PC-9 (cell line): ENCODE measurements at regions of chr2 and their contacts with region 1.

Region 1: DNA sequence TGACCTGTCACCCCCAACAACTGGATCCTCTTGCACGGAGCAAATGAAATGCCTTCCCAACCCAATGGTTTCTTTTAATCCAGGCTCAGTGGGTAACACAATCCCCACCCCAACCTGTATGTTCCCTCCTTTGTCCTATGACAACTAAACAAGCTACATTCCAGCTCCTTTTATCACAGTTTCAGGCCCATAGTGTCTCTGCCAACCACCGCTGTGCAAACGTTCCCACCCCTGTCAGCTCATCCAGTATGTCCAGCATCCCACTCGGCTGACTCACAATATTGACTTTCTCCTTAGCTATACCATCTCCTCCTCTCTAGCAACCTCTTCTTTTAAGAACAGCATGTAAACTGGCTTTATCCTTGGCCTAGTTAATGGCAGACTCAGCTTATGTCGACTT is 117.9 kb upstream of the PPP1CB start:
- DNase-seq: peak; percentile 83 to 98
- H3K4me3 ChIP-seq: no peak overlapping the region
- H3K27ac ChIP-seq: peak overlapping the region; percentile 85
- H3K4me1 ChIP-seq: peaks cover 28% of the 10 kb centered on the region
- H3K27me3 ChIP-seq: no peaks in the 10 kb centered on the region
- CTCF ChIP-seq: no peak

Region 2: DNA sequence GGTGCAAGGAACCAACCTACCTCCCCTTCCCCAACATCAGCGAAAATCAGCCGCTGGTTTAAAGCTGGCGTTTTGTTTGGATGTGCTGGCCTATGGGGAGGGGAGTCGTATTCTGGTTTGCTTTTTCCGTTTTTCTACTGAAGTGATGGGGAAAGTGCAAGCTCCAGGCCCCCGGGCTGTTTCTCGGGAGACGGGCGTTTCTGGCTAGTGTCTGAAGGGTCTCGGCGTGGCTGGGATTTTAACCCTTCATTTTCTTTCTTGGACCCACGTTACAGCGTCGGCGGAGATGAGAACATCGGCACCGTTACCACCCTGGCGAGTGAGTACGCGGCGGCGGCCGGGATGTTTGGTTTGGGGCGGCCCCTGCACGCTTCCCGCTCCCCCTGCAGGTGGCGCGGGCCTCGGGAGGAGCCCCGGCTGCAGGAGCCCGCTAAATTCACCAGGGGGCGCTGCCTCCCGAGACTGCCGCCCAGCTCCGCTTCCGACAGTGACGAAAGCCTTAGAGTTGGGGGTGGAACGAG is 67.2 kb before region 1 on chr2:
- CTCF ChIA-PET with region 1: no interaction called
- POLR2A ChIA-PET with region 1: interaction called, 23 read pairs
- intact Hi-C with region 1: no loop called
- DNase-seq: peak; percentile 64 to 89
- H3K4me3 ChIP-seq: peak overlapping the region; percentile 79
- H3K27ac ChIP-seq: no peak overlapping the region
- H3K4me1 ChIP-seq: peaks cover 6% of the 10 kb centered on the region
- H3K27me3 ChIP-seq: no peaks in the 10 kb centered on the region
- CTCF ChIP-seq: peak; percentile 100

Region 3: GRCh38 chr2:28643911-28644334 is 10.2 kb after region 1 on chr2:
- CTCF ChIA-PET with region 1: no interaction called
- POLR2A ChIA-PET with region 1: interaction called, 10 read pairs
- intact Hi-C with region 1: loop called (anchors 1 kb)
- DNase-seq: peak; percentile 48 to 92
- H3K4me3 ChIP-seq: peak overlapping the region; percentile 24; the same call in 1 of the 2 replicates
- H3K27ac ChIP-seq: peak overlapping the region; percentile 90
- H3K4me1 ChIP-seq: peaks cover 71% of the 10 kb centered on the region
- H3K27me3 ChIP-seq: no peaks in the 10 kb centered on the region
- CTCF ChIP-seq: no peak

Region 4: DNA sequence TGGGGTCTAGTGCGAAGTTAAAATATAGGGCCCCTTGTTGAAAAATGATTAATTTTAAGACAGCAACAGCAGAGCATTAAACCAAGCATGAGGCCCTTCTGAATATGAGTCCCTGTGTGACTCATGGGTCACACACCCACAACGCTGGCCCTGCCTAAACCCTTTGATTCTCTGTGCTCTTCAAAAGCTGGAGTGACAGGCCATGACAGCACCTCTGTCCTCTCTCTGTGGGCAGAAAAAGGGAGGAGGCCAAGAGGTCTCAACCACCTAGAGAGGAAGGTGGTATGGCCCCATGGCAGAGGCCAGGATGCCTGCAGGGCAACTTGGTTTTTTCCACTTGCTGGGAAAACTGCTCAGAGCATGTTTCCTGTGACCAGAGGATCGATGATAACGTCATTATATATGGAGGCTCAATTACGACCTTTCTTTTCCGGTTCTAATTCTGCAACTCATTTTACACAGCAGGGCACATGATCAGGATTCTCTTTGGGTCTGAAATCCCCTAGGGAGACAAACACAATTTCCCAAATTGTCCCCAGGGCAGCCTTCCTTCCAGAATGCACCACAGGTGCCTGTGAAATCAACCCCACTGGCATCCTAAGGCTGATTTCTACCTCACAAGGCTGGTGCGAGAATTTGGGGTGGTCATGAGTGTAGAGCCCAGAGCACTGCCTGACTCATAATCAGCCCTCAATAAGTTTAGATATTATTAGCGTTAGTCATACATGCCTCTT is 15.9 kb after region 1 on chr2:
- CTCF ChIA-PET with region 1: no interaction called
- POLR2A ChIA-PET with region 1: no interaction called
- intact Hi-C with region 1: loop called (anchors 1 kb)
- DNase-seq: peak; percentile 74 to 93
- H3K4me3 ChIP-seq: peak overlapping the region; percentile 7; the same call in 1 of the 2 replicates
- H3K27ac ChIP-seq: peak overlapping the region; percentile 87
- H3K4me1 ChIP-seq: peaks cover 61% of the 10 kb centered on the region
- H3K27me3 ChIP-seq: no peaks in the 10 kb centered on the region
- CTCF ChIP-seq: no peak